HEK293 (cell line): ENCODE measurements at regions of chr12 and their contacts with region 1.

Region 1: DNA sequence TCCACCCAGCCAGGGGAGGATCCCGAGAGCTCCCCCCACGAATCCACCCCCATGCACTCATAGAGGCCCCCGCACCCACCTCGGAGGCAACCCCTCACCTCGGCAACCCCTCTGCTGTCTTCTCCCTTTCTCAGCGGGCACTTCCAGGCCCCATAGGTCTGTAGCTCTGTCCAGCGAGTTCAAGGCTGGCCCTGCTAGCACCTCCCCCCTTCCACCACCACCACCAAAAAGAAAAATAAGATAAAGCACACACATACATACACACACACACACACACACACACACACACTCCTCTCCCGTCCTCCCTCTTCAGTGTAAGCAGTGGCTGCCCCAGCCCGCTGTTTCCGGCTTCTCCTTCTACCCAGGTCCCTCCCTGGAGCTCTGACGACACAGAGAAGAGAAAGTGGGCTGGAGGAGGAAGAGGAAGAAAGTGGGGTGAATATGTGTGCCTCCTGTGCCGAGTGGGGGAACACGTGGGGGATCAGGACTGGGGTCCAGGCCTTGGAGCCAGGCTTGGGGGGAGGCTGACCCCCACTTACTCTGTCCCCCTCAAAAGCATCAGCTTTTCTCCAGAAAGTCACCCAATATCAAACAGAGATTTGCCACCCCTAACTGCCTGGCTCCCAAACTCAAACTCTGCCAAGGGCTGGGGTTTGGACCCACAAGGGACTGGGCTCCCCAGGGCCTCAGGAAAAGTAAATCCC is at the start of gene STAT6:
- H3K4me3 ChIP-seq: peak within 1 kb of the TSS; percentile 40
- H3K27ac ChIP-seq: peak within 1 kb of the TSS; percentile 67
- H3K4me1 ChIP-seq: 0 out of 2 replicates have a peak, but pooled peaks cover 3% of the 10 kb centered on the region
- CTCF ChIP-seq: no peak

Region 2: GRCh38 chr12:56987551-56988053 is 123.6 kb before region 1 on chr12:
- CTCF ChIA-PET with region 1: interaction called, 15 read pairs
- POLR2A ChIA-PET with region 1: interaction called, 3 read pairs
- H3K4me3 ChIP-seq: no peak overlapping the region
- H3K27ac ChIP-seq: no peak overlapping the region
- H3K4me1 ChIP-seq: no peaks in the 10 kb centered on the region
- CTCF ChIP-seq: peak; percentile 87

Region 3: DNA sequence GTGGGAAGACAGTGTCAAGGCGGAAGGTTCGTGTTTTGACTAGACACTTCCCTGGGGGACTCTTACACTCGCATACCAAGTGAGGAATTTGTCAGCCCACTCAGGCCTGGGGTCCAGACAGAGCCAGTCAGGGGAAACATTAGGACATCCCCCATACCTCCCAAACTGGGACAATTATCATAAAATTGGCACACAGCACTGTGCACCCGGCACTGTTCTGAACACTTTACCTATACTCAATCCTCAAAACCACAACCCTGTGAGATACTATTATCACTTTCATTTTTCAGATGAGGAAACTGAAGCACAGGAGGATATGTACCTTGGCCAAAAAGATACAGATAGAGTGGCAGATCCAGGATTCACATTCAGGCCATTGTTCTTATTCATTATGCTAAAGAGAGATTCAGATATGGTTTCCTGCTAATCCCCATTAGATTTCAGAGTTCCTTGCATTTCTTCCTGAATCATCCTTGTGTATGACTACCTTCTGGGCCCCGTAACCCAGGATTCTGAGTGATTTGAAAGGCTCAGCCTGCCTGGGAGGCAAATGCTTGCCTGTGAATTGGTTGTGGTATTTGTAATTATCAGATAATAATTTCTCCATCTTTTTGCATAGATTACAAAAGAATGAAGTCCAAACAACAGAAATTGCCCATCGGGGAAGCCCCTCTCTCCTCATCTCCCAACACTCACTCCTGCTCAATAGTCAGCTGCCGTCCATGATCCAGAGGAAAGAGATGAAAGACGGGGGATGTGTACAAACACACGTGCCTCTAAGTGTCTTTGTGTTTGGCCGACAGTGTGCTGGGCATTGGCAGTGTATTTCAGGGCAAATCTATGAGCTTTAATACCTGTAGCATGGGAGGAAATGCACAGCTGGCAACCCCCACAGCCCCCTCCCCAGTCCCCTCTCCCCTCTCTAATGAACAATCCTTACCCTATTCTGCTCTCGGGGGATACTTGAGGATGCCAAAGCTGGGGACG is 99.5 kb before region 1 on chr12:
- CTCF ChIA-PET with region 1: interaction called, 60 read pairs
- POLR2A ChIA-PET with region 1: interaction called, 3 read pairs
- H3K4me3 ChIP-seq: no peak overlapping the region
- H3K27ac ChIP-seq: no peak overlapping the region
- H3K4me1 ChIP-seq: no peaks in the 10 kb centered on the region
- CTCF ChIP-seq: no peak

Region 4: GRCh38 chr12:57063991-57064685 is 47.0 kb before region 1 on chr12:
- CTCF ChIA-PET with region 1: interaction called, 135 read pairs
- POLR2A ChIA-PET with region 1: interaction called, 47 read pairs
- H3K4me3 ChIP-seq: no peak overlapping the region
- H3K27ac ChIP-seq: no peak overlapping the region
- H3K4me1 ChIP-seq: no peaks in the 10 kb centered on the region
- CTCF ChIP-seq: no peak

Region 5: GRCh38 chr12:57078519-57079404 is 32.4 kb before region 1 on chr12 and contains the start of gene NEMP1:
- CTCF ChIA-PET with region 1: interaction called, 135 read pairs
- POLR2A ChIA-PET with region 1: interaction called, 35 read pairs
- H3K4me3 ChIP-seq: peak within 1 kb of the TSS; percentile 75
- H3K27ac ChIP-seq: peak within 1 kb of the TSS; percentile 96
- H3K4me1 ChIP-seq: peaks cover 3% of the 10 kb centered on the region
- CTCF ChIP-seq: no peak

Region 6: DNA sequence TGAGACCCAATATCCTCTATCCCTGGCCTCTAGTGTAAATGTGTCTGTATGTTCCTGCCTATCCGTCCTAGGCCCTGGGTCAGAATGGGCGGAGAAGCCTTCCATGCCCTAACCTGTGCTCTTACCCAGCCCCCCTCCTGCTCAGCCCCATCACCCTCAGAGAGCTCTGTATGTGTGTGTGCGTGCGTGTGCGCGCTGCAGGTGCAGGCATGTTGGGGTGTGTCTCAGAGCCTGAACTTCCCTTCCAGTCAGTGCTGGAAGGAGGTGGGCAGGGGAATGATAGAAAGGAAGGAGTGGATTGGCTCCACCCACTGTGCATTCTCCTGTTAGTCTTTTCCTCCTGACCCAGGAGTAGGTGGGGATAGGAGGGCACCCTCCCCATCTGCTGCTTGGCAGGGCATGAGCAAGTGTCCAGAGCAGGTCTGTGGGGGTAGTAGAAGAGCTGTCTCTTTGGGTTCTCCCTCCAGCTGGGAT is 15.0 kb before region 1 on chr12:
- CTCF ChIA-PET with region 1: interaction called, 43 read pairs
- POLR2A ChIA-PET with region 1: interaction called, 8 read pairs
- H3K4me3 ChIP-seq: no peak overlapping the region
- H3K27ac ChIP-seq: no peak overlapping the region
- H3K4me1 ChIP-seq: no peaks in the 10 kb centered on the region
- CTCF ChIP-seq: no peak